ENCODE measurements at regions of chr3 and their contacts with region 1.

Region 1: DNA sequence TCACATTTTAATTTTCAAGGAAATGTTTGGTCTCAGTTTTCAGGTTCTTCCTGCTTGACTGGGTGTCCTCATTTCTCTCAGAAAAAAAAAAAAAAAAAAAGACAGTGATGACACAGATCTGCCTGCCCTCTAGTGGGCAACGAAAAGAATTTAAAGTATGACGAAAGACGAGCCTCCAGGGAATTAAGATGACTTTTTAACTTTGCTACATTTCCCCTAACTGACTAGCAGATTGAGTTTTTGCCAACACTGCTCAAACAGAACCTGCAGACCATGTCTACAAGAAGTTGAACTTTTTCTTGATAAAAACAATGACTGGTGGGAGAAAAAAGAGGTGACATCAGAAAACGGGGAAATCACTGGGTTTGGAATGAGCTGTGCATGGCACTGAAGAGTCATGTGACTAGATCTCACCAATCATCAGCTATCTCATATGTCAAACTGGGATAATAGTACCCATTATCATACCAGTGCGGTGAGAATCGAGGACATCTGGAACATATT is 40.8 kb downstream of the EOMES start:
- DNase-seq: peak; percentile 72
- H3K4me3 ChIP-seq: peak overlapping the region in 2 of 3 experiments; percentile 15 to 24
- H3K27ac ChIP-seq: peak overlapping the region; percentile 27
- H3K4me1 ChIP-seq: peaks cover 21% of the 10 kb centered on the region
- H3K27me3 ChIP-seq: no peaks in the 10 kb centered on the region
- CTCF ChIP-seq: peak; percentile 64 to 67

Region 2: DNA sequence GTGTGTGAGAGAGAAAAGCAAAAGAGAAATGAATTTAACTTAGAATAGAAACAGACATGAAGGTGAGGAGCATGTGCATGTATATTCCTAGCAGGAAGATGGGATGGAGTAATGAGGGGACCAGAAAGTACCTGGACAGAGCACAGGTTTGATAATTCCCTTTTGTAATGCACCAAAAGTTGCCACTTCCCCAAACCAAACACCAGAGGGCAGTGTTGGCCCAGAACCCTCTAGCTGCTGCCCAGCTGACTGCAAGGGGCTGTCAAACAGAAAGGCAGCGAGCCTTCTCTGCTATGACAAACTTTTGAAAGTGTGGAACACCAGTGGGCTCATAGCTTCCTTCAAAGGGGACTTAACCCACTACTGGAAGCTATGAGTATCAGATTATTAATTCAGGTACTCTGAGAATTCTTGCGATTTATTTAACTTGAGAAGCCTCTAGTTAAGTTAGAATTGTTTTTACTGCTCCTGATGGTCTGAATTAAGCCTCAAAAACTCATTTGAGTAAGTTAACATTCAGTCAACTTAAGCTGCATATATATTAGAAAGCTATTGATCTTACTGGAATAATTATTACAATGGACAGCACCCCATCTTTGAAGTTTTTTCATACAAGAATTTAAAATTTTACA is 547.0 kb before region 1 on chr3:
- CTCF ChIA-PET with region 1: no interaction called
- dilution Hi-C with region 1: no loop called
- in situ Hi-C with region 1: no loop called
- intact Hi-C with region 1: loop called (anchors 10 kb)
- DNase-seq: peak; percentile 46
- H3K4me3 ChIP-seq: no peak overlapping the region
- H3K27ac ChIP-seq: no peak overlapping the region
- H3K4me1 ChIP-seq: no peaks in the 10 kb centered on the region
- H3K27me3 ChIP-seq: no peaks in the 10 kb centered on the region
- CTCF ChIP-seq: peak; percentile 86 to 95

Region 3: GRCh38 chr3:27357665-27358258 is 323.5 kb before region 1 on chr3:
- CTCF ChIA-PET with region 1: interaction called, 4 read pairs
- dilution Hi-C with region 1: no loop called
- in situ Hi-C with region 1: loop called in 1 of 2 experiments (anchors 25 kb)
- intact Hi-C with region 1: loop called (anchors 1 kb)
- DNase-seq: peak; percentile 38
- H3K4me3 ChIP-seq: no peak overlapping the region
- H3K27ac ChIP-seq: no peak overlapping the region
- H3K4me1 ChIP-seq: peaks cover 11% of the 10 kb centered on the region
- H3K27me3 ChIP-seq: no peaks in the 10 kb centered on the region
- CTCF ChIP-seq: peak; percentile 68 to 72

Region 4: GRCh38 chr3:27467545-27467944 is 213.8 kb before region 1 on chr3:
- CTCF ChIA-PET with region 1: no interaction called
- dilution Hi-C with region 1: no loop called
- in situ Hi-C with region 1: no loop called
- intact Hi-C with region 1: loop called (anchors 5 kb)
- DNase-seq: peak; percentile 14
- H3K4me3 ChIP-seq: no peak overlapping the region
- H3K27ac ChIP-seq: no peak overlapping the region
- H3K4me1 ChIP-seq: no peaks in the 10 kb centered on the region
- H3K27me3 ChIP-seq: no peaks in the 10 kb centered on the region
- CTCF ChIP-seq: peak; percentile 48 to 59

Region 5: GRCh38 chr3:27632431-27633223 is 48.7 kb before region 1 on chr3:
- CTCF ChIA-PET with region 1: no interaction called
- dilution Hi-C with region 1: no loop called
- in situ Hi-C with region 1: no loop called
- intact Hi-C with region 1: loop called (anchors 1 kb)
- DNase-seq: peak; percentile 60
- H3K4me3 ChIP-seq: peak overlapping the region in 2 of 3 experiments; percentile 38 to 46
- H3K27ac ChIP-seq: no peak overlapping the region
- H3K4me1 ChIP-seq: no peaks in the 10 kb centered on the region
- H3K27me3 ChIP-seq: no peaks in the 10 kb centered on the region
- CTCF ChIP-seq: no peak

Region 6: DNA sequence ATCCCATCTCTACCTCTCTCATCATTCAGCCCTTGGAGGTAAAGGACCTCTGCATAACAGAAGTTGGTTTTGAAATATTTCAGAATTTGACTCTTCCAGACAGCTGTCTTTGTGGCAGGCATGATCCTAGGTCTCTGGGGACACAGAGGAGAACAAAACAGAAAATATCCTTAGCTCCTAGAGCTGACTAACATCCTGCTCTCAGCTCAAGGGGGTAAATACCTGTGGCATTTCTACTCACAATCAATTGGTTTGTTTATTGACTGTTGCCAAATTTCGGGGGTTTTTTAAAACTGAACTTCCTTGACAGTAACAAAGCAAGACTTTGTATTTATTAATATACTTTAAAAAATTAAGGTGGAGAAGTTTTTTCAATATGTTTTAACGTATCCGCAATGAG is 37.9 kb before region 1 on chr3:
- CTCF ChIA-PET with region 1: no interaction called
- dilution Hi-C with region 1: no loop called
- in situ Hi-C with region 1: no loop called
- intact Hi-C with region 1: no loop called
- DNase-seq: peak; percentile 46
- H3K4me3 ChIP-seq: no peak overlapping the region
- H3K27ac ChIP-seq: no peak overlapping the region
- H3K4me1 ChIP-seq: peaks cover 9% of the 10 kb centered on the region
- H3K27me3 ChIP-seq: no peaks in the 10 kb centered on the region
- CTCF ChIP-seq: no peak

Measured in mammary epithelial cell (primary cell).